ENCODE measurements at regions of chr17 and their contacts with region 1.

Region 1: DNA sequence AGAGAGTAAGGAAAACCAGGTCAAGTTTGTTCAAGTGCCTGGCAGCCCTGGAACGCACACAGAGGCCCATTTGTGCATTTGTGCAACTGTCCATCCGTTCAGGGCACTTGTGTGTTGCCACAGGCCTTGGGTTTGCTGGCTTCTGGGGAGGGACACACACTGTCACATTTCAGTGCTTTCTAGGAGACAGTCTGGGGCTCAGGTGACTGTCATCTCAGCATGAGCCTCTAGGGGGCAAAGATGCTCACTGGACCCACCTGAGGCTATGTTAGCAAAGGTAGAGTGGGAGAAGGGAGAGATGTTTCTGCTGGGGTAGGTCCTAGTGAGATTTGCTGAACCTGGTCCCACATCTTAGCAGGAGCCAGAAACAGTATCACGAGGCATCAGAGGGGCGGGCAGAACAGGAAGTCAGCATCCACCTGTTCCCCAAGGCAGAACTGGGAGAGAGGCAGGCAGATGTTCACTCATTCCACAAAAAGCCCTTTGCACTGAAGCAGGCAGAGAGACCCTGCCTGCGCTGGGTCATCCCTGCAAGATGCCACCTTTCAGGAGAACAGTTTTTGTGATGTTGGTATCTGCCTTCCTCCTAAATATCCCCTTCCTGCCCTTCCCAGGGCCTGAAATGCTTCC is 48.5 kb downstream of the RAI1 start:
- DNase-seq: peak; percentile 57
- H3K4me3 Mint-ChIP-seq: no peak overlapping the region
- H3K27ac Mint-ChIP-seq: no peak overlapping the region
- H3K4me1 Mint-ChIP-seq: peaks cover 37% of the 10 kb centered on the region
- H3K27me3 Mint-ChIP-seq: no peaks in the 10 kb centered on the region
- CTCF ChIP-seq: peak; percentile 50

Region 2: GRCh38 chr17:17712268-17712924 is 17.3 kb before region 1 on chr17:
- CTCF ChIA-PET with region 1: interaction called, 13 read pairs
- POLR2A ChIA-PET with region 1: interaction called, 6 read pairs
- intact Hi-C with region 1: no loop called
- DNase-seq: peak; percentile 51
- H3K4me3 Mint-ChIP-seq: no peak overlapping the region
- H3K27ac Mint-ChIP-seq: peak overlapping the region; percentile 41
- H3K4me1 Mint-ChIP-seq: peaks cover 28% of the 10 kb centered on the region
- H3K27me3 Mint-ChIP-seq: no peaks in the 10 kb centered on the region
- CTCF ChIP-seq: no peak

Region 3: GRCh38 chr17:17774009-17774881 is 44.5 kb after region 1 on chr17:
- CTCF ChIA-PET with region 1: interaction called, 3 read pairs
- POLR2A ChIA-PET with region 1: no interaction called
- intact Hi-C with region 1: loop called (anchors 2 kb)
- DNase-seq: peak; percentile 86
- H3K4me3 Mint-ChIP-seq: no peak overlapping the region
- H3K27ac Mint-ChIP-seq: peak overlapping the region; percentile 92
- H3K4me1 Mint-ChIP-seq: peaks cover 31% of the 10 kb centered on the region
- H3K27me3 Mint-ChIP-seq: no peaks in the 10 kb centered on the region
- CTCF ChIP-seq: peak; percentile 73

Region 4: GRCh38 chr17:17890773-17891759 is 161.3 kb after region 1 on chr17:
- CTCF ChIA-PET with region 1: no interaction called
- POLR2A ChIA-PET with region 1: no interaction called
- intact Hi-C with region 1: no loop called
- DNase-seq: peak; percentile 71
- H3K4me3 Mint-ChIP-seq: no peak overlapping the region
- H3K27ac Mint-ChIP-seq: peak overlapping the region; percentile 21
- H3K4me1 Mint-ChIP-seq: no peaks in the 10 kb centered on the region
- H3K27me3 Mint-ChIP-seq: no peaks in the 10 kb centered on the region
- CTCF ChIP-seq: peak; percentile 77